Right ventricle myocardium inferior (tissue), 1 donor: ENCODE measurements at regions of chr17 and their contacts with region 1.

Region 1: DNA sequence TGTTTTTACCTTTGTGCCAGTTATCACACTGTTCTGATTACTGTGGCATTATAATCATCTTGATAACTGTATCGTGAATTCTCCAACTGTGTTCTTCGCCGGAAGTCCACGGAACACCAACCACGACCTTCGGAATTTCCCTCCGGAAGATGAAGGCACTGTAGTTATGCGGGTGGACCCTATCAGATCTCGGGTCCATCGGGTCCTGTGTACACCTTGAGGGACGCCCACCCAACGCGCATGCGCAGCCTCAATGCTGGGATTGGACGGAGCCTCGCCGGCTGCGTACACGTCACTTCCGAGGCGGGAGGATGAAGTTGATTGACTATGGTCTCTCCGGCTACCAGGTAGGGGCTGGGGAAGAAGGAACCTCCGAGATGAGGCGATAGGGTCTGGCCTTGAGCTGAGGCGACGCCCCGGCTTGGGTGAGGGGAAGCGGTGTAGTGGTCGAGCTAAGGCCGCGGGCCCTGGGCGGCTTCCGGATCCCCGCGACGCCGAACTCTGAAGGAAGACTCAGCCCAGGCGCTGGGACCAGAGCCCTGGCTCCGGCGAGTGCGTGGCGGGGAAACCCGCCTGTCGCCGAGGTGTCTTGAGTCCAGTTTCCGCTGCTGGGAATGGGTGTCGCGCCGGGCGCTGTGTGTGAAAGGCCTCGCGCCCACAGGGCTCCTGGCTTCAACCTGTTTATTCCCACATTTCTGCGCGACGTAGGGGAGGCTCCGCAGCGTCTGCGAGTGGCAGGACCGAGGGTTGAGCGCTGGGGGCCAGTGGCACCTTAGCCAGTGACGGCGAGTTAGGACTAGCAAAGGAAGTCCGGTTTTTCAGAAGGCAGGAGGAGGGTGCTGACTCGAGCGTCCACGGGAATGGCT is at the start of gene DHRS7B:
- DNase-seq: peak; percentile 97
- ATAC-seq: peak; percentile 96
- total RNA-seq, gene DHRS7B: 28.4 TPM

Region 2: GRCh38 chr17:21043286-21044232 is 83.3 kb before region 1 on chr17:
- intact Hi-C with region 1: loop called (anchors 5 kb)
- DNase-seq: peak; percentile 99
- ATAC-seq: peak; percentile 97

Region 3: DNA sequence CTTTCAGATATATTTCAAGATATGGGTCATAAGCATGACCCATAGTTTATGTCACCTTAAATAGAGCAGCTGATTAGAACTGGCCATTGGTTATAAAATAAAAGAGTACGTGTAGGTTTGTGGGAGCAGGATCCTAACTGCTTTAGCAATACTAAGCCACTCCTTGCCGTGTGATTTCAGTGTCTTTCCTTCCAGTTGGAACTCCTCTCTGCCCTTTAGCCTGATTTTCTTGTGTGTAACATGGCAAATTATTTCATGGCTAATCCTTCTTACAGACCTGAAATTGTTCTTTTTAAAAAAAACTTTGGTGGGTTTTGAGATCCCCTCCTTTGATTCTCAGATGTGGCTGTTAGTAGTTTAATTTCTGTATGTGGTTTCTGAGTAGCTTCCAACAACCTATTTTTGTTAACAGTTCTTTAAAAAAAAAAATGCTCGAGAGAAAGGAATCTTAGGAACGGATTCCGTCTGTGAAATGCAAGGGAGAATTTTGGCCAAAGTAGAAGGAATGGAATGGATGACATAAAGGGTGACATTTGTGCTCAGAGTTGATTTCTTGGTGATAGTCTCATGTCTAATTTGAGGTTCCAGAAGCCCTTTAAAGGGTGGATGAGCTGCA is 39.8 kb after region 1 on chr17:
- intact Hi-C with region 1: loop called (anchors 5 kb)
- DNase-seq: no peak
- ATAC-seq: peak; percentile 42

Region 4: DNA sequence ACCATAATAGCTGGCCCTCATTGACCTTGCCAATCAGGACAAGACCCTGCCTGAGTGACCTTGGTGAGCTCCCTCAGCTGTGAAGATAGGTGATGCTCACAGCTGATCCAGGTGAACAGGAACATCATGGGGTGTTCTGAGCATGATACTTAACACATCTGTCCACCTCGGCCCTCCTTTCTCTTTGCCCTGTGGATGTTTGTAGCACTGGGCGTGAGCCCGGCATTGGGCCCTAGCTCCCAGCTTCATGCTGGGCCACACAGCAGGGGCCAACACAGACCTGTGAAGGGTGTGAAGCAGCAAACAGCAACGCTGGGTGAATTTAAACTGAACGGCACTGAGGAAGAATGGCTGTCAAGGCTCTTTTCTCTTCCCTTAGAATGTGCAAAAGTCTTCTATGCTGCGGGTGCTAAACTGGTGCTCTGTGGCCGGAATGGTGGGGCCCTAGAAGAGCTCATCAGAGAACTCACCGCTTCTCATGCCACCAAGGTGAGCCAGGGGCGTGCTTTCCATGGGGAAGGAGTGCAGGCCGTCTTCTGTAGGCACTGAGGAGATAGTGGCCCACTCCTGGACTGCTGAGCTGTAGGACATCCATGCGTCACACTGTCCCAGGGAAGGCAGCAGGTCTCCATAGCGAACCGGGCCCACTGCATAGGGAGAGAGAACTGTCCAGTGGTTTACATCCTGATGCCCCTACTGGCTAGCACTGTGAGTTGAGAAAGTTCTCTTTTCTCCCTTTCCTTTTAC is 51.1 kb after region 1 on chr17:
- intact Hi-C with region 1: no loop called
- DNase-seq: no peak
- ATAC-seq: no peak

Region 5: DNA sequence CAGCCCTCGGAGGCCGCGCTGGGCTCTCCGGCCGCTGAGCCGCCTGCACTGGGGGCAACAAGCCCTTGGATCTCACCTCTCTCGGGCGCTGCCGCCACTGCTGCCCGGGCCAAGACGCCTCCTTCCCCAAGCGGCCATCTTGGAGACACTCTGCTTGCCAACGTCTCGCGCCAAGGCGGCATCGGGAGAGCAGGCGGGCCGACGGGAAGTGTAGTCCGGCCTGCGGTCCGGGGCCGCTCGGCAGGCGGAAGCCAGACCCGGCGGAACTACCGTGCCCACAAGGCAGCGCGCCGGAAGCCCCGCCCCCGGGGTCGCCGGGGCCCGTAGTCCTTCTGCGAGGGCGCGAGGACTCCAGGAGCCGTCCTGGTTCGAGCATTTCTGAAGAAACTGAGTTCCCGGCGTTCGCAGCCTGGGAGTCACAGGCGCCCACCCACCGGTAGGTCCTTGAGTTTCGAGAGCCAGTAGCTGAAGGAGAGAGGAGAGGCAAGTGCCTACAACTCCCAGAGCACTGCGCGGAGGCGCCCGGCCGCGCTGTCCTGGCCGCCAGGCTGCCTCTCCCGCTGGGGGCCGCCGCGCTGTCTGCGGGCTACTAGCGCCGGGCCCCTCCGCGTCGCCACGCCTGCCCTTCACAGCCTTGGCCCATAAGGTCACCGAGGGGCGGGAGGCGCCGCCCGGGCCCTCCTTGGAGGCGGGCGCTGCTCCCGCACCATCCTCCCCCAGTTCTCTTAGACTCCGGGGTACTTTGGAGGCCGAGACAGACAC is 87.3 kb after region 1 on chr17 and contains the start of gene TMEM11:
- intact Hi-C with region 1: loop called (anchors 2 kb)
- DNase-seq: peak; percentile 99
- ATAC-seq: peak; percentile 96
- total RNA-seq, gene TMEM11: 35.3 TPM

Region 6: DNA sequence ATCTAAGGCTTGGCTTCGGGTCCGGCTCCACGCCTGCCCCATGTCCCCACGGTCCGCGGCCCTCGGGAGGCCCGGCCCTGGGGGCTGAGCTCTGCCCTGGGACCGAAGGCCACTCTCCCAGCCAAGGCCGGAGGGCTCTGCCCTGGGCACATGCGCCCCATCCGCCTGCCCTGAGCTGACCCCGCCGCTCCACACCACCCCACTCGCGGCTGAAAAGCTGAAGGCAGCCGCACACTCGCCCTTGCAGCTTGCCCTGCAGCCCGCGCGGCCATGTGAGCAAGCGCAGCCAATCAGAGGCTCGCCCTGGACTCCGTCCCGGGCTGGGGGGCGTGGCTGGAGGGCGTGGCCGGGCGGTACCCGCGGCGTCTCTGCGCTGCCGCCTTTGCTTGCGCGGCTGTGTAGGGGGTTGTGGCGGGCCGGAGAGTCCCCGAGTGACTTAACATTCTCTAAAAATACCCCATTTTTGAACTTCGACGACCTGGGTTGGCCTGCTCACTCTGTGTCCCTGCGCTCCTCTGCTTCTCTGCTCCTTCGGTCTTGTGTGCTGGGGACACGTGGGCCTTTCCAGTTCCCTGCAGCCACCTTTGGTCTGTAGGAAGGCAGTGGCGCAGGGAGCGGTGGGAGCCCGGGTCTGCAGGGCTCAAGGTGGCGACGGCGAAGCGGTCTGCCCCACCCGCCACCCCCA is 148.8 kb after region 1 on chr17:
- intact Hi-C with region 1: loop called (anchors 2 kb)
- DNase-seq: peak; percentile 98
- ATAC-seq: peak; percentile 97

Region 7: DNA sequence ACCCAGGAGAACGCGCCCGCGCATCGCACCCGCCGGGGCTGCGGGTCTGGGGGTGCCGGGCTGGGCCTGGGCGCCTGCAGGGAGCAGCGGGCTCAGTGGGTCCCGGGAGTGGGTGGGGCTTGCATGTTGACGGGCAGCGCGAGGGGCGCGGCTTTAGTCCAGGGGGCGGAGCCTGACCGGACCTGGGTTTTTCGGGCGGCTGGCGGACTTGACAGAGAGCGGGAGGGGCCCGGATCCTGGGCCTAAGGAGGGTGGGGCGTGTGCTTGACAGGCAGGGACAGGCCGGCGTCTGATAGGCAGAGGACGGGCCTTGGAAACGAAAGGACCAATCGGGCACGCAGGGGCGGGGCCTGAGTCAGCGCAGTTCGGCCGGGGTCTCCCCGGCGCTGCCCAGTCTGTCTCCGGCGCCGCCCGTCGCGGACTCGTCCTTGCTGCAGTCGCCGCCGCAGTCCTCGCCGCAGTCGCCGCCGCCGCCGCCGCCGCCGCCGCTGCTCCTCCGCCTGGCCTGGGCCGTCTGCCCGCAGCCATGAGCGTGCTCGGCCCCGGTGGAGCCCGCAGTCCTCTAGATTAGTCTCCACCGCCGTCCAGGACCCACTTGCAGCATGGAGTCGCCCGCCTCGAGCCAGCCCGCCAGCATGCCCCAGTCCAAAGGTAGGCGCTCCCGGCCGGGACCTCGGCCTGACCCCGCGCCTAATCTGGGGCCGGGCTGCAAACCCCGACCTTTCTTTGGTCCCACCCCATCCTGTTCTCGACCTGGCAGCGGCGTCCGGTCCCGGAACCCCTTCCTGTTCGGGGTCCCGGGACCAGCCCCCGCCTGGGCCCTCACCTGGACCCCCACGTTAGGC is 157.7 kb after region 1 on chr17 and contains the start of gene MAP2K3:
- intact Hi-C with region 1: loop called (anchors 2 kb)
- DNase-seq: peak; percentile 100
- ATAC-seq: peak; percentile 89
- total RNA-seq, gene MAP2K3: 37.7 TPM

Region 8: DNA sequence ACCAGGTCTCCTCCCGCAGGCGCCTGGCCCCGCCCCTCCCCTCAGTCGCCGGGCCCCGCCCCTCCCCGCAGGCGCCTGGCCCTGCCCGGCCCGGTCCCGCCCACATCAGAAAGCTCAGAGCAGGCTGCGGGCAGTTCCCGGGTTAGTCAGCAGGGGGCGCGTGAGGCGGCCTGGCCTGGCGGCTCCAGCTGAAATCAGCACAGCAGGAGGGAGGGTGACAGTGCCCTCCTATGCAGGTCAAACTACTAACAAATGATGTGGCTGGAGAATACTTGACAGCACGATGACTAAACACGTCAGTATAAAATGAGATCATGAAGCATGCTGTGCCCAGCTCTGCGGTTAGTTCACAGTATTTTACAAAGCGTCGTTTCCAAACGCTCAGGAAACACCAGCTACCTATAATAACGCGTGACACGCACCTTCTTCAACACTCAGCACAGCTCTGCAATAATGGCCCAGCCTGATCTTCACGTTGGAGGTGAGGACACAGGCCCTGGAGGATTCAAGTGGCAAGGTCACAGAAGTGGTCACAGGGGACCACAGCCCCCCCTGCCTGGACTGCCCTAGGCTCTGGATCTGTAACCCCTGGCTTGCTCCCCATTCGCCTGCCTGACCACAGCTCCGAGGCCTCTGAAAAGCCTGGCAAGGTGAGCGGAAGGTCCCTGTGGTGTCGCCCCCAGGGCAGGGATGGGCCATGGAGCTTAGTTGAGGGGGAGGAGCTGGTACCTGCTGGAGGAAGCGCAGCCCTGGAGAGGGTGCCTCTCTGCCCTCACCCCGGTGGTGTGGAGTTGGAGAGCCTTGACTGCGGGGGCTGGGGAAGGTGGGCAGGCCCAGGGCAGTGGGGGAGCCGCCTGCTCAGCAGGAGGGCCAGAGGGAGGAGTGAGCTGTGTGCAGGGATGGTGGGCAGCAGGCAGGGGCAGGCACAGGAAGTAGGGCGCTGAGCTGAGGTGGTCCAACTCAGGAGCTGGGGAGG is 330.5 kb after region 1 on chr17:
- intact Hi-C with region 1: loop called (anchors 5 kb)
- DNase-seq: peak; percentile 93
- ATAC-seq: peak; percentile 95